Left cardiac atrium (tissue), 4 donors: ENCODE measurements at regions of chr6 and their contacts with region 1.

Region 1: DNA sequence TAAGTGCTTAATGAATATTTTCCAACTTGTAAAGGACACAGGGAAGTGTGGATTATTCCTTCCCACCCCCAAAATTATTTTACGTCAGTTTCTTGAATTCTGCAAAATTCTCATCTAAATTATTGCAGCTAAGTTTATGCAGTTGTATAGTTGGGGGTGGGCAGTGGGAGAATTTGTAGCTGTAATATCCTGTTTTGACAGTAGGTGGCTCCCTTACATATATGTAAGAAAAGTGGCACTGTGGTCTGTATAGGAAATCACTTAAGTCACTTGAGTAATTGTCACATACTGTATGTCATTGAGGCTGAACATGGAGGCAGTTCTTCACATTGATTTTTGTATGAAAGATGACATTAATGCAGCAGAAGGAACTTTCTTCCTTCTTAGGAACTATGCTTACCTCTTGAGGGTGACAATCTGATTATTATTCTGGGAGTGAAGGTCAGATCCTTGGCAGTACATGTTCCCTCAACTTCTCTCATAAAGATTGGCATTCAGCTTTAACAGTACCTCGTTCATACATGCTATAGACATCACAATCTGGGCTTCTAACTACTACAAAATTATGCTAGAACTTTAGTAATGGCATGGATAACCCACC is 14.7 kb upstream of the CFAP206 start:
- DNase-seq: no peak
- ATAC-seq: peak; percentile 72

Region 2: DNA sequence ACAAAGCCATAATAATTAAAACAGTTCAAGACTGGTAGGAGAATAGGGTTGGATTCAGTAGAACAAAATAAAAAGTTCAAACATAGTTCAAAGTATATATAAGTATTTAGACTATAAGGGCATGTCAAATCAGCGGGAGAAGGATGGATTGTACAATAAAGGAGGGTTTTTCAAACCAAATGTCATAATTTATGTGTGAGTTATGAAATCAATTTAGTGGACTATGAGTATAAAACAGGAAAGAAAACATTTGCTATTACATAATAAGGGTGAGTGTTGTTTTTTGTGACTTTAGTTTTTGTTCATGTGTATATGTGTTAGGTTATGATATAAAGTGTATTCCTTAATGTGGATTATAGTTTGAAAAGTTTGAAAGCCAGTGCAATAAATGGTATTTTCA is 207.5 kb after region 1 on chr6:
- intact Hi-C with region 1: no loop called
- DNase-seq: no peak
- ATAC-seq: no peak

Region 3: GRCh38 chr6:88780714-88781389 is 1387.7 kb after region 1 on chr6:
- intact Hi-C with region 1: loop called in 1 of 2 experiments (anchors 10 kb)
- DNase-seq: peak; percentile 26
- ATAC-seq: peak; percentile 63 to 65